ENCODE measurements at regions of chr15 and their contacts with region 1.

Region 1: DNA sequence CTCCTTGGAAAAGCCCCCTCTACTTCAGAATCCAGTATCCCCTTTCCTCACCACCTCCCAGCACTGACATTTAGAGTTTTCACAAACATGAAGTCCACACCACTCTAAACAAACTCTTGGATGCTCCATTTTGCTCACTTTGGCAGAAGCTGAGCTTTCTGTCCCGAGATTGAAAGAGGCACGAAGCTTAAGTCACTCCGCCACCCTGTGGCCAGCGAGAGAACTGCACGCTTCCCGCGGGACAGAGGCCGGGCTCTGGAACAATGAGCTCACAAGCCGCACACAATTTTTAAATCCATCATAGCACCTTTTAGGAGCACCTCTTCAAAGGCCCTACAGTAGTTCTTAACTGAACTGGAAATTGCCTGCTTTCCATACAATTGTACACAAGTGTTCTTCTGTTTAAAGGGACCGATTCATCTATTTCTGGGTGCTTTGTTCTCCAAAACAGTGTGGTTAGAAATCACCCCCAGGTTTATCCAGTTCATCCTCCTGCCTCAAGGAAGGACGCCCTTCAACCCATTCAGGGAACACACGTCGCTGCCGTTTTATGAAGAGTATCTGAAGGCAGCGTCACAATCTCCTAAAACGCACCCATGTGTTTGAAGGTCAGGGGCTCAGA is 226.1 kb downstream of the VPS13C start:
- DNase-seq: peak; percentile 73
- CTCF ChIP-seq: peak; percentile 96

Region 2: GRCh38 chr15:60362321-60363086 is 1471.7 kb before region 1 on chr15:
- CTCF ChIA-PET with region 1: interaction called, 29 read pairs
- POLR2A ChIA-PET with region 1: no interaction called
- DNase-seq: no peak
- CTCF ChIP-seq: no peak

Region 3: DNA sequence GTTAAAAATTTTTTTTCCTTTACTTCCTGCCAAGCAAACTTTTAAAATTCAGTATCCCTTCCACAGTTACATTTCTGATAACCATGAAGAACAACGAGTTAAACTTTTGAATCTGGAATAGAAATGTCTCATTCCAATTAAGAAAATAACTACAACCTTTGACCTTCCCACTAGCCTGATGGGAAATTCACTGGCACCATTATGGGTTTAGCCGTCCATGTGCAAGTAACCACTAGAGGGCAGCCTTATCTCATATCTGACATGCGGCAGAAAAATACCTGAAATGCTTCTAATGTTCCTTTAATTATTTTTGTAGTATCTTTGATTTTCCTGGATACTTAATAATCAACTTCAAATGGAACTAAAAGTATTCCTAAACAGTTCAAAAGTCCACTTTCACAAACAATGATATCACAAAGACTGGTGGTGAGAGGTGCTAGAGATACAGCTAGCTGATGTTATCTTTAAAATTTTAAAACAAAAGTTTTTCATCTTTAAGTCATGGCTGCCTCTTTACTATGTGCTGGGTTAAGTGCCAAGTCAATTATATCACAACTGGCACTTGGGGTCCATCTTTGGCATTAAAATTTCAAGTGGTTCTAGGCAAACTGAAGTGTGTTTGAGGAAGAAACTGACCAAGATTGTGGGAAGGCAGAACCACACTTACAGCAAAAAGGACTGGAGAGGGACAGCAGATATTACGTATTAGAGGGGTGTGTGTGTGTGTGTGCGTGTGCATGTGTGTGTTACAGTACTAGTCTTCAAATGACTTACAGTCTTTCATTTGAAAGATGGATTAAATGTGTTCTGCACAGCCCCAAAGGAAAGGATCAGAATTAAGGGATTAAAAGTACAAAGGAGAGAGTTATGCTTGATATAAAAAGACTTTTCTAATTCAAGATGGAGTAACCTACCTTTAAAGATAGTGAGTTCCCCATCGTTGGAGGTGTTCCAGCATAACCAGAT is 1248.2 kb before region 1 on chr15:
- CTCF ChIA-PET with region 1: interaction called, 11 read pairs
- POLR2A ChIA-PET with region 1: no interaction called
- DNase-seq: peak; percentile 44
- CTCF ChIP-seq: peak; percentile 78

Region 4: DNA sequence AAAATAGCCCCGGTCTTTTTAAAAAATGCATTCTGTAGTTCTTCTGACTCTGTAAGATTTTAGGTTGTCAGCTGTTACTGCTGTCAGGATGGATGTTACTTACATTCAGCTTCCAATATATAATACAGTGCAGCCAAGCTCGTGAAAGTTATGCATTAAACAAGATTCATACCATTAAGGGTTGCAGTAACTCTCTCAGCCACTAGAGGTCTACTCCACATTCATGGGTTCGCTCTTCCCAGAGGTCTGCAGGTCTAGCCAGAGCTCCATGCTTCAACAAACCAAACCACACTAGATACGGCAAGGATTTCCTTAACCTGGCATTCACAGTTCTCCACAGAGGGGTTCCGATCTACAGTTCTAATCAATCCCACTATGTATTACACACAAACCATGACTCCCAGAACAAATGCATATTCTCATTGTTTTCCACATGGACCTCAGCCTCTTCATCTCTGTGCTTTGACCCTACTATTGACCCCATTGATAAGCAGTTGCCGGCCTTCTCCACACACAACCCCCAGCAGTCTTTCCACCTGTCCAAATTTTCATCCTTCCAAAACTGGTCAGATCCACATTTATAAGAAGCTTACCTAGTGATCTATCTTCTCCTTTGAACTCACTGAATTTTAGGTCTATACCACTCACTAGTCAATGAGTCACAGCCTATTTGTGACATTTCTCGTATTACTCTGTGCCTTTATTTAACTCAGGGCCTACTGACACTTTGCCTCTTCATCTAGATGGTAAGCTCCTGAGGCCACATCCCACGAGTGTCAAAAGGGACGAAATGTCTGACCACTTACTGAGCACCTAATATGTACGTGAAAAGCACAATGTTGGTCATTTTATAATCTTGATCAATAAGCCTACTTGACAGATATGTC is 638.8 kb before region 1 on chr15:
- CTCF ChIA-PET with region 1: interaction called, 19 read pairs
- POLR2A ChIA-PET with region 1: no interaction called
- DNase-seq: peak; percentile 38
- CTCF ChIP-seq: peak; percentile 60

Region 5: GRCh38 chr15:61809216-61809615 is 25.0 kb before region 1 on chr15:
- CTCF ChIA-PET with region 1: interaction called, 13 read pairs
- POLR2A ChIA-PET with region 1: no interaction called
- DNase-seq: no peak
- CTCF ChIP-seq: no peak

Region 6: DNA sequence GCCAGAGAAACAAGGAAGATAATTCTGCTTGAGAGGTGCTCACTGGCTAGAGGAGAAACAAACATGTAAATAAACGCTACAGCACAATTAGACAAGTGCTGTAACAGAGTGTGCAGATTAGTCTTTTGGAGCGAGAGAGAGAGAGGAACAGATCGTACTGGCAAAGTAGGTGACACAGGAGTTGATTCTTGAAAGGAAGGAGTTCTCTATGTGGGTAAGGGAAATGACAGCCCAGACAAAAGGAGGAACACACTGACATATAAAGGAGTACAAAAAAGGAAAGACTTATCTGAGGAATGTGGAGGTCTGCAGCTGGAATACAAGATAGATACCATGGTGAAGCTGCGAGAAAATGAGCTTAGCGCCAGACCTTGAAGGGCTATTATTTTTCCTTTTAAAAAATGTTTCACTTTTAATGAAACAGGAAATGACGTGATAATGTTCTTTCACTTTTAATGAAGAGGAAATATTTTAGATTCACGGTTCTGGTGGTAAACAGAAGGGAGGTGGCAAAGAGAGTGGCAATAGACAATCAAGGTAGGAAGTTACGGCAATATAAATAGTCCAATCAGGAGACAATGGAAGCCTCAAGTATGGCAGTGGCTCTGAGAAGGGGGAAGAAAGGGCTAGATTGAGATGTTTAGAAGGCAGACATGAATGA is 23.1 kb after region 1 on chr15:
- CTCF ChIA-PET with region 1: interaction called, 25 read pairs
- POLR2A ChIA-PET with region 1: no interaction called
- DNase-seq: no peak
- CTCF ChIP-seq: no peak